ENCODE measurements at regions of chr1 and their contacts with region 1.

Region 1: DNA sequence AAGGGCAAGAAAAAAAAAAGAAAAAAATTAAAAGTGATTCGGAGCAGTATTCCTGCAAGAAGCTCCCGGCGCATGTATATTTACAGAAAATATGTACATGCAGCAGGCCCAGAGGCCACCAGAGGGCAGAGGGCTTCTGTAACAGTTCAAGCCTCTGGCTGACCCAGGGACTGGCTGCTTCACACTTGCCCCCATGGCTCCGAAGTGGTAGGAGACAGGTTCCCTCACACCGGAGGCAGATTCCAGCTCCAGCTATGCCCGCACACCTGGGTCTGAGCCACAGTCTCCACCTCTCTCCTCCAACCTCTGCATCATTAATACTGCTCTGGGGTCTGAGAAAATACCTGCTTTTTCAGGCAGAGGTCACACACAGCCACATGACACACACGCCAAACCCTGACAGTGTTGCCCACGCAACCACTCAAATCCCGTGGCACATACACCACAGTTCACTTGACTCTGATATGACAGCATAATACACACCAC is 2.2 kb upstream of the ARHGAP30 start:
- DNase-seq: peak; percentile 72
- H3K4me3 Mint-ChIP-seq: no peak overlapping the region
- H3K27ac Mint-ChIP-seq: no peak overlapping the region
- H3K4me1 Mint-ChIP-seq: peaks cover 29% of the 10 kb centered on the region
- H3K27me3 Mint-ChIP-seq: no peaks in the 10 kb centered on the region

Region 2: GRCh38 chr1:161013488-161014230 is 58.3 kb before region 1 on chr1:
- CTCF ChIA-PET with region 1: interaction called, 3 read pairs
- intact Hi-C with region 1: loop called (anchors 2 kb)
- DNase-seq: peak; percentile 87
- H3K4me3 Mint-ChIP-seq: peak overlapping the region; percentile 68
- H3K27ac Mint-ChIP-seq: peak overlapping the region; percentile 89
- H3K4me1 Mint-ChIP-seq: peaks cover 32% of the 10 kb centered on the region
- H3K27me3 Mint-ChIP-seq: no peaks in the 10 kb centered on the region

Region 3: DNA sequence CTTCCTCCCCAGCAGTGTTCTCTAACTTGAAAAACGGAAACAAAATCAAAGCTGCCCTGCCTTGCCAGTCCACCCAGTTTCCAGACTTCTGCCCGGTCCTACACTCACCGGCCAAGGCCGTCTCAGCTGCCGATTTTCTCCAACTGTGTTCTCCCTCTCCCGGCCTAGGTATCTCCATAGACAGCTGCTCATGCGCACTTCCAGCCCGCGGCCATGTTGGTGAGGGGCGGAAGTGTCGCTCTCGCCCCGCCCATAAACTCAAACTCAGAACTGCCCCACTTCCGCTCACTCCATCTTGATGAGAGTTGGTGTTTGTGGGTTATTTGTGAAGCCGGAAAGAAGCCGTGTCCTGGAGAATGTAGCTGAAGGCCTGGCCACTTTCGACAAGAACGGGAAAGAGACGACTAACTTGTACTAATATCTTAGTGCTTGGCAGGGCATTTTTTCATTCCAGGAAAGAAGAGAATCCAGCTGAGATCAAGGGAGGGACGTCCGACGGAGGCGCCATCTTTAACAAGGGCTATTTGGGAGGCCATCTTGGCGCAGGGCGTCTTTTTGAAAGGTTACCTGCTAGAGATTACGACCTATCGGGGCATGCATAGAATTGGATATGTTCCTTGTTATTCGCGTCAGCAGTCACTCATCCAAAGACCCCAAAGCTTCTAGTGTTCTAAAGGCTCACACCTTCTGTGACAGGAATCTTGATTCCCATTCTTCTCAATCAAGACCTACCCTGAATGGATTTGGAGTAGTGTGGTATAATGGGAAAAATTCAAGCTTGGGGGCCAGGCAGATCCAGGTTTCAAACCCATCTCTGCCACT is 26.0 kb before region 1 on chr1 and contains the start of gene USF1:
- CTCF ChIA-PET with region 1: interaction called, 14 read pairs
- intact Hi-C with region 1: loop called (anchors 1 kb)
- DNase-seq: peak; percentile 95
- H3K4me3 Mint-ChIP-seq: peak within 1 kb of the TSS; percentile 88
- H3K27ac Mint-ChIP-seq: peak within 1 kb of the TSS; percentile 99
- H3K4me1 Mint-ChIP-seq: peaks cover 32% of the 10 kb centered on the region
- H3K27me3 Mint-ChIP-seq: no peaks in the 10 kb centered on the region
- total RNA-seq, gene USF1: 43.7 to 44.2 TPM

Region 4: DNA sequence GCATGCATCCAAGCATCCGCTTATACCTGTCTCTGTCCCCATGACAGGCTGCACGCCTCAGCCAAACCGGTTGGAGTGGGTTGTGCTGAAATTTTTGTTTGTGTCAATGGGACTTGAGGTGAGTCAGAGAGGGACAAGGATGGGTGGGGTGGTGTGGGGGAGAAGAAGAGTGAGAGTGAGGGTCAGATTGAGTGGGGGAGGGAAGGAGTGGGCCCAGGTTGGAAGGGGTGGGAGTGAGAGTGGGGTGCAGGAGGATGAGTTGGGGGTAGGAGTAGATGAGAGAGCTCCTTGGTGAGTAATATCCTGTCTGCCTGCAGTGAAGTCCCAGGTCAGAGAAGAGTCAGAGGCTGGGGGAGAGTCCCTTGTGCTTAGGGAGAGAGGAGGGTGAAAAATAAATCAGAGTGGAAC is 20.7 kb after region 1 on chr1:
- CTCF ChIA-PET with region 1: interaction called, 221 read pairs
- intact Hi-C with region 1: loop called (anchors 1 kb)
- DNase-seq: peak; percentile 80
- H3K4me3 Mint-ChIP-seq: no peak overlapping the region
- H3K27ac Mint-ChIP-seq: no peak overlapping the region
- H3K4me1 Mint-ChIP-seq: peaks cover 61% of the 10 kb centered on the region
- H3K27me3 Mint-ChIP-seq: no peaks in the 10 kb centered on the region

Region 5: GRCh38 chr1:161132410-161133219 is 60.7 kb after region 1 on chr1 and contains the start of gene DEDD:
- CTCF ChIA-PET with region 1: interaction called, 16 read pairs
- intact Hi-C with region 1: loop called (anchors 1 kb)
- DNase-seq: peak; percentile 95
- H3K4me3 Mint-ChIP-seq: no peak within 1 kb of the TSS
- H3K27ac Mint-ChIP-seq: no peak within 1 kb of the TSS
- H3K4me1 Mint-ChIP-seq: peaks cover 44% of the 10 kb centered on the region
- H3K27me3 Mint-ChIP-seq: no peaks in the 10 kb centered on the region
- total RNA-seq, gene DEDD: 29.7 to 34.0 TPM

Region 6: DNA sequence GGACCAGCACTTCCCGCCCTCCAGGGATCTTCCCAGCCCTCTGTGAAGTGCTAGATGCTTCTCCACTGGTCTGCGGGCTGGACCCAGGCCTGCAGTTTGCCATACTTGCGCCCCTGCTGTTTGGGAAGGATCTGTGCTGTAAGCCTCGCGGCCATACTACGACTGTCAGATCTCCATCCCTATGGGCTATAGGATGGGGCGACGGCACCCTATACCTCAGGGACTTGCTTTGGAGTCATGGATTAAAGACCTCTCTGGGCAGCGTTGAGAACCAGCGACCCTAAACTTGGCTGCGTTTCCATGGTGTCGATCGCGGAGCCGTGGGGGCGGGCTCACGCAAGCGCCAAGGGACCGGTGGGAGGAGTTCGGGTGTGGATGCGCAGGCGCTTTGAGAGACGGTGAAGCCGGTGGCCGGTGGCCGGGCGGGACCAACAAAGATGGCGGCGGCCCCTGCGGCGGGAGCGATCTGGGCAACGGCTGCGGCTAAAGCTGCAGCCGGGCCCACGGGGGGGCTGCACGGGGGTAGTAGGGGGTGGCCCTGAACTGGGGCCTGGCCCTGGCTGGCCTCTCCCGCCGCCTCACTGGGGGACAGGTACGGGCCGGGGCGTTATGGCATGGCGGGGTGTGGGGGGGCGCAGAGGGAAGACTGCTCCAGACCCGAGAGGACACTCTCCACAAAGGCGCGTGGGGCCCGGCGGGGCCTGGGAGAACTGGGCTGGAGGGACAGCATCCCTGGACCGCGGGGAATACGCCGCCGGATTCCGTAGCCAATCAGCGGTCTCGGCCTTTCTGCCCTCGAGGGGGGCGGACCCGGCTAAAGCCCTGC is 87.4 kb after region 1 on chr1 and contains the start of gene USP21:
- CTCF ChIA-PET with region 1: interaction called, 3 read pairs
- intact Hi-C with region 1: loop called (anchors 2 kb)
- DNase-seq: peak; percentile 94
- H3K4me3 Mint-ChIP-seq: peak within 1 kb of the TSS; percentile 82
- H3K27ac Mint-ChIP-seq: peak within 1 kb of the TSS; percentile 86
- H3K4me1 Mint-ChIP-seq: peaks cover 58% of the 10 kb centered on the region
- H3K27me3 Mint-ChIP-seq: no peaks in the 10 kb centered on the region
- total RNA-seq, gene USP21: 35.7 to 36.1 TPM

Measured in activated naive CD4-positive, alpha-beta T cell treated with anti-CD3 and anti-CD28 coated beads for 36 hours (primary cell).